ENCODE measurements at regions of chr19 and their contacts with region 1.

Region 1: DNA sequence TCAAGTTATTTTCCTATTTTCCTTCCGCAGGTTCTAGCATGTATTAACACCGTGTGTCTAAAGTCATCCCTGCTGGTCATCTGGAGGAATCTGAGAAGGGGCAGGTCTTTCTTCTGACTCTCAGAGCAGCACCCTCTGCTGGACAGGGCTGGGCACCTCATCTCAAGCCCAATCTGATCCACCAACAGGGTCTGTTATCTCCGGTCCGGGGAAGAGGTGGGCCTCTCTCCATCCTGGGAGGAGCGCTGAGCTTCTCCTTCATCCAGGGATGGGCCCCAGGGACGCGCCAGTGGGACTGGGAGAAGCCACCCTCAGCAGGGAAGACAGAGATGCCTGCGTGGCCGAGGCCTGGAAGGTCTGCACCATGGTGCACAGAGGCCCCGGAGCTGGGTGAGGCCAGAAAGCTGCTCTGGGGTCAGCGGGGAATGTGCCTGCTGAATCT is 26.0 kb upstream of the ZNF331 start:
- DNase-seq: peak; percentile 40 to 69
- H3K4me3 ChIP-seq: no peak overlapping the region
- H3K27ac ChIP-seq: no peak overlapping the region
- H3K4me1 ChIP-seq: no peaks in the 10 kb centered on the region
- H3K27me3 ChIP-seq: peaks cover 0 to 2% of the 10 kb centered on the region in 2 donors
- CTCF ChIP-seq: peak; percentile 55 to 68

Region 2: DNA sequence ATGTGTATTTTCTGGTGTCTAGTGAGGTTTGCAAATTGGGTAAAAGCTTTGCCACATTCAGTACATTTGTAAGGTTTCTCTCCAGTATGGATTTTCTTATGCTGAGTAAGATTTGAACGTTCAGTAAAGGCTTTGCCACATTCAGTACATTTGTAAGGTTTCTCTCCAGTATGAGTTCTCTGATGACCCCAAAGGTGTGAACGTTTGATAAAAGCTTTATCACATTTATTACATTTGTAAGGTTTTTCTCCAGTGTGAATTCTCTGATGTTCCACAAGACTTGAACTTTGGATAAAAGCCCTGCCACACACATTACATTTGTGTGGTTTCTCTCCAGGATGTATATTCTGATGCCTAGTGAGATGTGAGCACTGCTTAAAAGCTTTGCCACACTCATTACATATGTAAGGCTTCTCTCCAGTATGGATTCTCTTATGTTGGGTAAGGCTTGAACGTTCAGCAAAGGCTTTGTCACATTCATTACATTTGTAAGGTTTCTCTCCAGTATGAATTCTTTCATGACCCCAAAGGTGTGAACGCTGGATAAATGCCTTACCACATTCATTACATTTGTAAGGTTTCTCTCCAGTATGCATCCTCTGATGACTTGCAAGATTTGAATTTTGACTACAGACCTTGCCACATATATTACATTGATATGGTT is 274.7 kb before region 1 on chr19:
- intact Hi-C with region 1: no loop called
- DNase-seq: no peak
- H3K4me3 ChIP-seq: no peak overlapping the region
- H3K27ac ChIP-seq: no peak overlapping the region
- H3K4me1 ChIP-seq: no peaks in the 10 kb centered on the region
- H3K27me3 ChIP-seq: no peaks in the 10 kb centered on the region
- CTCF ChIP-seq: no peak

Region 3: DNA sequence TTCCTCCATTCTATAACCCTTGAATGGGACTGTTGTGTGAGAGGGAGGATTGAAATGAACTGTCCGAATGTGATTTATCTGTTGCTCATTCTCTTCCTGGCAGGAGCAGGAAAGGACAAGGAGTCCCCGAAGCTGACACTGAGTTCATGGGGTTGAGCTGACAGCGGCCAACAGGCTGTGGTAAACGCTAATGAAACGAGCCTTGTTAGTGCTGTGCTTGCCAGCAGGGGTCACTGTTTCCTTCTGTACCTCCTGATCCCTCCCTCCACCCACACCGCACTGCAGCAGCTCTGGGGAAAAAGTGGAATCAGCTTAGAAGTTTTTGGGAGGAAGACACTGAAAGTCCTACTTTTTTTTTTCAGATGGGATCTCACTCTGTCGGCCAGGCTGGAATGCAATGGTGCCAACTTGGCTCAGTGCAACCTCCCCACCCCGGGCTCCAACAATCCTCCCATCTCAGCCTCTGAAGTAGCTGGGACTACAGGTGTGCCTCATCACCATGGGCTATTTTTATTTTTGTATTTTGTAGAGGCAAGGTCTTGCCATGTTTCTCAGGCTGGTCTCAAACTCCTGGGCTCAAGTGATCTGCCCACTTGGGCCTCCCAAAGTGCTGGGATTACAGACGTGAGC is 86.9 kb before region 1 on chr19:
- intact Hi-C with region 1: loop called (anchors 10 kb)
- DNase-seq: peak; percentile 71 to 82
- H3K4me3 ChIP-seq: no peak overlapping the region
- H3K27ac ChIP-seq: no peak overlapping the region
- H3K4me1 ChIP-seq: peaks cover 0 to 4% (median 0%) of the 10 kb centered on the region in 4 donors
- H3K27me3 ChIP-seq: no peaks in the 10 kb centered on the region
- CTCF ChIP-seq: peak; percentile 68 to 70

Region 4: DNA sequence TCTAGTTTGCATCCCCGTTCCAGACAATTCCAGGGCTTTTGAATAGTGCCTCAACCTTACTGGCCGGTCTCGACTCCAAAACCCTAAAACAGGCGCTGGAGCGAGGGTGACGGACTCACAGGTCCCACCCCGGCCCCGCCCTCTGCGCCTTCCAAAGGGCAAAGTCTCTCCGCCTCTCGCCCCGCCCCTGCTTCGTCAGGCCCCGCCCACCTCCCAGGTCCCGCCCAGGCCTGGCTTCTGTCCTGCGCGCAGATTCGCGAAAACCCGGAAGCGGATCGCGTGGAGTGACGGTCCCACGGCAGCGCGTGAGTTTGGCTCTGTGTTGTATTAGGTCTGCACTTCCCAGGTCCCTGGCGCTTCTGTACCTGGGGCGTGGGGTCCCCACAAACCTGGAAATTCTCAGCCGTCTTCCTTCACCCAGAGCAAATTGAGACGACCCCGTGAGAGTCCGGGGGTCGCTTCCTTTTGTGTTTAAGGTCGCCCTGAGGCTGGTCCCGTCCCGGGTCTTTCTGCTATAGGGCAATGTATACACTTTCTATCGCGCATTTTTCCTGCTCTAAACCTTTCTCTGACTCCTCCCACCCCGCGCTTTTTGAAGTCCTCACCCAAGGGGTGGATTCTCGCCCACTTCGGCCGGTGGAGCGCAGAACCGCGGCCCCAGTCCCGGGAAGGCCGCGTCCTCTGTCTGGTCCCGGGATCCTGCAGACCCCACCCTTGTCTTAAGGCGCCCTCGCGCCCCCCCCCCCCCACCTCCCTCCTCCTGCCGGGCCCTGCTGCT is 44.3 kb before region 1 on chr19 and contains the start of gene ZNF813:
- intact Hi-C with region 1: loop called (anchors 10 kb)
- DNase-seq: peak; percentile 96 to 97
- H3K4me3 ChIP-seq: peak within 1 kb of the TSS; percentile 60 to 83
- H3K27ac ChIP-seq: peak within 1 kb of the TSS; percentile 53 to 76
- H3K4me1 ChIP-seq: peaks cover 0 to 22% (median 8%) of the 10 kb centered on the region in 4 donors
- H3K27me3 ChIP-seq: no peaks in the 10 kb centered on the region
- CTCF ChIP-seq: no peak